CD4-positive, alpha-beta T cell (primary cell): ENCODE measurements at regions of chr15 and their contacts with region 1.

Region 1: DNA sequence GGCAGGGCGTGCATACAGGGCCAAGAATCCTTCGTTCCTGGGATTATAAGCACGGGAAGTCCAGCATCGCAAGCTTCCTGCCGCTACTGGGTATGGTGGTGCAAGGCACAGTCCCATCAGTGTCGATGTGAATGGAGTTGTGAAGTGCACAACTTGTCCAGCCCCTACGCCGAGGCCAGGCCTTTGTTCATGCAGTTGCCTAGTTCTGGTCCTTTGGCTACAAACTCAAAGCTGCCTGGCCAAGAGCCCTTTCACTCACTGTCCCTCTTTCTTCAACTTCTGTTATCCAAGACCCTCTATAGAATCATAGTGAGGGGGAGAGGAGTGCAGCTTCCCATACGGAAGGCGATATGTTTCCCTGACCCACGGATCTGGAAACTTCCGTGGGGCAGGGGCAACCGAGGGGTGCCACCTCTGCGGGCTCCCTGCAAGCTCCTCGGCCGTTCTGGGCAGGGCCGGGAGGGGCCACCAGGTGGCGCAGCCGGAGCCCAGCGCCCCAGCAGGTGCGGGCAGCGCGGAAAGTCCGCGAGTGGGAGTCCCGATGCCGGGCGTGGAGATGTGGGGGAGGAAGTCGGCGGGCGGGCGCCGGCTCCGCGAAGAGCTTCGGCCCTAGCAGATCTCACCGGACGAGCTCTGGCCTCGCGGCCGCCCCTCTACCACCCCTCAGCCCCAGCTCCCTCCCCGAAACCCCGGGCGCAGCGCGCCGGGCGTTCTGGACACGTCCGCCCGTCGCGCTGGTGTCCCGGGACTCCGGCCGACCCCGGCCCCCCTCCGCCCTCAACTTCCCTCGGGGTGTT is 693 bp downstream of the RASGRP1 start:
- DNase-seq: peak; percentile 75 to 93 (median 87)
- ATAC-seq: peak; percentile 63
- H3K4me3 ChIP-seq: peak overlapping the region; percentile 95
- H3K4me3 Mint-ChIP-seq: peak overlapping the region; percentile 98
- H3K27ac ChIP-seq: peak overlapping the region; percentile 57 to 93
- H3K27ac Mint-ChIP-seq: peak overlapping the region; percentile 93
- H3K4me1 ChIP-seq: peaks cover 54% of the 10 kb centered on the region
- H3K4me1 Mint-ChIP-seq: peaks cover 77% of the 10 kb centered on the region
- H3K27me3 ChIP-seq: no peaks in the 10 kb centered on the region
- H3K27me3 Mint-ChIP-seq: no peaks in the 10 kb centered on the region
- CTCF ChIP-seq: peak; percentile 90

Region 2: GRCh38 chr15:38504680-38505467 is 59.0 kb before region 1 on chr15:
- CTCF ChIA-PET with region 1: interaction called, 10 read pairs
- POLR2A ChIA-PET with region 1: interaction called, 3 read pairs
- intact Hi-C with region 1: no loop called
- DNase-seq: no peak
- ATAC-seq: no peak
- H3K4me3 ChIP-seq: no peak overlapping the region
- H3K4me3 Mint-ChIP-seq: no peak overlapping the region
- H3K27ac ChIP-seq: no peak overlapping the region
- H3K27ac Mint-ChIP-seq: peak overlapping the region; percentile 79
- H3K4me1 ChIP-seq: no peaks in the 10 kb centered on the region
- H3K4me1 Mint-ChIP-seq: peaks cover 8% of the 10 kb centered on the region
- H3K27me3 ChIP-seq: no peaks in the 10 kb centered on the region
- H3K27me3 Mint-ChIP-seq: no peaks in the 10 kb centered on the region
- CTCF ChIP-seq: no peak

Region 3: DNA sequence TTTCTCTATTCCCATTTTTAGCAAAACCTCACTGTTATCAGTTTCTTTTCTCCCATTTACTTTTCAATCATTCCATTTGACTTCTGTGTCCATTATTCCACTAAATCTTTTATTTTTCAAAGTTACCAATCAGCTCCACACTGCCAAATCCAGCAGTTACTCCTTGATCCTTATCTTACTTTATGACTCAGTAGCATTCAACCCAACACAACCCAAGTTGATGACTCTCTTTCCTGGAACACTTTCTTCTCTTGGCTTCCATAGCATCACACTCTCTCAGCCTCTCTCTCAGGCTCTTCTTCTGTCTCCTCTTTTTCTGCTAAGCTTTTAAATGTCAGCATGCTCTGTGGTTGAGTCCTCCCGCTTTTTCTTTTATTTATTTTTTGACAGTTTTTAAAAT is 35.6 kb before region 1 on chr15:
- CTCF ChIA-PET with region 1: interaction called, 20 read pairs
- POLR2A ChIA-PET with region 1: interaction called, 5 read pairs
- intact Hi-C with region 1: loop called in 1 of 2 experiments (anchors 5 kb)
- DNase-seq: no peak
- ATAC-seq: no peak
- H3K4me3 ChIP-seq: no peak overlapping the region
- H3K4me3 Mint-ChIP-seq: no peak overlapping the region
- H3K27ac ChIP-seq: no peak overlapping the region
- H3K27ac Mint-ChIP-seq: peak overlapping the region; percentile 80
- H3K4me1 ChIP-seq: peaks cover 33% of the 10 kb centered on the region
- H3K4me1 Mint-ChIP-seq: peaks cover 95% of the 10 kb centered on the region
- H3K27me3 ChIP-seq: no peaks in the 10 kb centered on the region
- H3K27me3 Mint-ChIP-seq: no peaks in the 10 kb centered on the region
- CTCF ChIP-seq: no peak

Region 4: GRCh38 chr15:38610748-38611147 is 46.8 kb after region 1 on chr15:
- CTCF ChIA-PET with region 1: interaction called, 4 read pairs
- POLR2A ChIA-PET with region 1: interaction called, 9 read pairs
- intact Hi-C with region 1: loop called in 1 of 2 experiments (anchors 1 kb)
- DNase-seq: peak in 5 of 14 experiments; percentile 6 to 59 (median 39)
- ATAC-seq: peak; percentile 89
- H3K4me3 ChIP-seq: no peak overlapping the region
- H3K4me3 Mint-ChIP-seq: peak overlapping the region; percentile 1
- H3K27ac ChIP-seq: peak overlapping the region in 1 of 2 donors; percentile 72
- H3K27ac Mint-ChIP-seq: peak overlapping the region; percentile 70
- H3K4me1 ChIP-seq: peaks cover 37% of the 10 kb centered on the region
- H3K4me1 Mint-ChIP-seq: peaks cover 53% of the 10 kb centered on the region
- H3K27me3 ChIP-seq: no peaks in the 10 kb centered on the region
- H3K27me3 Mint-ChIP-seq: no peaks in the 10 kb centered on the region
- CTCF ChIP-seq: no peak

Region 5: DNA sequence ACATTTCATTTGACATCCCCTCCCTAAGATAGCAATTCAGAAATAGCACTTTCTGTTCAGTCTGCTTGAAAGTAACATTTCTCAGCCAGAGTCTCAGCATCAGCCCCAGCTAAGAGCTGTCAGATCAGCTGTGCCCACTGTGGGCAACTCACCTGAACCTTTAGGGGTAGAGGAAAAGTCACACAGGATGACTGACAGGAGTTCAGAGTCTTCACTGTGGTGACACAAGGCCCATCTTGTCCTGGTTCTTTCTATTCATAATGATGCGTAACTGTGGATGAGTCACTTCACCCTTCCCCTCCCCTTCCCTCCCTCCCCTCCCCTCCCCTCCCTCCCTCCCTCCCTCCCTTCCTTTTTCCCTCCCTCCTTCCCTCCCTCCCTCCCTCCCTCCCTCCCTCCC is 96.8 kb after region 1 on chr15:
- CTCF ChIA-PET with region 1: interaction called, 14 read pairs
- POLR2A ChIA-PET with region 1: interaction called, 277 read pairs
- intact Hi-C with region 1: no loop called
- DNase-seq: peak in 7 of 14 experiments; percentile 15 to 70 (median 49)
- ATAC-seq: peak; percentile 58
- H3K4me3 ChIP-seq: no peak overlapping the region
- H3K4me3 Mint-ChIP-seq: peak overlapping the region; percentile 21
- H3K27ac ChIP-seq: no peak overlapping the region
- H3K27ac Mint-ChIP-seq: peak overlapping the region; percentile 78
- H3K4me1 ChIP-seq: peaks cover 42% of the 10 kb centered on the region
- H3K4me1 Mint-ChIP-seq: peaks cover 77% of the 10 kb centered on the region
- H3K27me3 ChIP-seq: no peaks in the 10 kb centered on the region
- H3K27me3 Mint-ChIP-seq: no peaks in the 10 kb centered on the region
- CTCF ChIP-seq: no peak

Region 6: DNA sequence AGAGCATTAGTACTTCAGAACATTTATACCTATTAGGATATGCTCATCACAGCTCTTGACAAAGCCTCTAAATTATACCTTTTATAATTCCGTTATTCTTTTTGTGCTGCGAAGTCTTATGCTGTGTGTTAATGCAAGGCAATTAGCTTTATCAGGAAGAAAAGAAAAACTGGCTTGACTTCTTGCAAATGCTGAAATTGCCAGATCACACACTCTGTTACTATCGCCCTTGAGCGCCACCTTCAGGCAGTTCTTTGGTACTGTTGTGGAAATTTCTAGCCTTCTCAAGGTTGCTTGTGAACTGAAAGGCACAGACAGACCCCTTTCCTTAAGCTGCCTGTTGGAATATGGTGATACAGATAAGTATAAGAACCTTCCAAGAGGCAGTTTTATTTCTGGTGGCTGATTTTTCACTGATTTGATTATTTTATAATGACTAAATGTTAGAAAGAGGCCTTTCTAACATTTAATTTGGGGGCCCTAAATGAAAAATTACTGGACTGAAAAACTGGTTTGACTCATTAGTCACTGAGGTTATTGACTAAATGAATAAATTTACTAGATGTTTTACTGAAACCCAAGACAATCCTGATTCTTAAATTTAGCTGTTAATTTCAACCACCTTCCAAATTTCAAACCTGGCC is 126.9 kb after region 1 on chr15:
- CTCF ChIA-PET with region 1: interaction called, 247 read pairs
- POLR2A ChIA-PET with region 1: interaction called, 178 read pairs
- intact Hi-C with region 1: loop called in 1 of 2 experiments (anchors 1 kb)
- DNase-seq: peak; percentile 71 to 93 (median 80)
- ATAC-seq: peak; percentile 34
- H3K4me3 ChIP-seq: no peak overlapping the region
- H3K4me3 Mint-ChIP-seq: peak overlapping the region; percentile 36
- H3K27ac ChIP-seq: peak overlapping the region in 1 of 2 donors; percentile 33
- H3K27ac Mint-ChIP-seq: peak overlapping the region; percentile 89
- H3K4me1 ChIP-seq: peaks cover 72% of the 10 kb centered on the region
- H3K4me1 Mint-ChIP-seq: peaks cover 74% of the 10 kb centered on the region
- H3K27me3 ChIP-seq: no peaks in the 10 kb centered on the region
- H3K27me3 Mint-ChIP-seq: no peaks in the 10 kb centered on the region
- CTCF ChIP-seq: peak; percentile 95